ENCODE measurements at regions of chr15 and their contacts with region 1.

Region 1: DNA sequence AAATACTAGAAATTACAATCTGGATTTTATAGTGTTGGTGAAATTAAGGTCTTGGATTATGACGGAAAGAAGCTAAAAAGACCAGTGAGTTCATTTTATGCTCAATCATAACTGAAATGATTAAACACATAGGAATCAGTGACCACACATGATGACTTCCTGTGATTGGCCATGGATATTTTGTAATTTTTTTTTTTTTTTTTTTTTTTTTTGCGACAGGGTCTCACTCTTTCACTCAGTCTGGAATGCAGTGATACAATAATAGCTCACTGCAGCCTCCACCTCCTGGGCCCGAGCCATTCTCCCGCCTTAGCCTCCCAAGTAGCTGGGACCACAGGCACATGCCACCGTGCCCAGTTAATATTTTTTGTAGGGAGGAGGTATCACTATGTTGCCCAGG is 47.4 kb downstream of the PAQR5 start:
- DNase-seq: no peak
- ATAC-seq: no peak
- H3K4me3 ChIP-seq: no peak overlapping the region
- H3K27ac ChIP-seq: no peak overlapping the region
- H3K4me1 ChIP-seq: peaks cover 0 to 9% (median 0%) of the 10 kb centered on the region in 9 donors
- H3K27me3 ChIP-seq: no peaks in the 10 kb centered on the region
- CTCF ChIP-seq: no peak

Region 2: DNA sequence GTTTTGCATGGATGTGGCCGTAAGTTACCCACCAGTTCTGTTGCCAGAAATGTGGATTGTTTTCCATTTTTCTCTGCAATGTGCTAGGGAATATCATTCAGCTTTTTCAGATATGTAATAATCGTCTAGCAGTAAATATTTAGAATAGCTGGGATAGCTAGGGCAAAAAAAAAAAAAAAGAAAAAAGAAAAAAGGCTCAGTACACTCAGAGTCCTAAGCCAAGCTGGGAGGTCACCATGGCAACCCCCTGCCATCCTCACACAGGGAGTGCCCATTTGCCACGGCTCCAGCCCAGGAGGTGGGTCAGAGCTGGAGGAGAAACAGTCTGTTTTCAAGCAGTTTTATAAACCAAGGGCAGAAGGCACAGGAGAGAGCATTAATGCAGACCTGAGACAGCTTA is 22.1 kb before region 1 on chr15:
- intact Hi-C with region 1: loop called in 1 of 10 experiments (anchors 1 kb)
- DNase-seq: no peak
- ATAC-seq: no peak
- H3K4me3 ChIP-seq: no peak overlapping the region
- H3K27ac ChIP-seq: no peak overlapping the region
- H3K4me1 ChIP-seq: no peaks in the 10 kb centered on the region
- H3K27me3 ChIP-seq: peaks cover 0 to 10% (median 0%) of the 10 kb centered on the region in 7 donors
- CTCF ChIP-seq: no peak

Measured in heart right ventricle (tissue), 16 donors.